T-cell (primary cell): ENCODE measurements at regions of chr11 and their contacts with region 1.

Region 1: GRCh38 chr11:90564531-90564930 is 341.7 kb upstream of the CHORDC1 start:
- DNase-seq: no peak
- ATAC-seq: no peak
- H3K4me3 ChIP-seq: no peak overlapping the region
- H3K4me3 Mint-ChIP-seq: no peak overlapping the region
- H3K27ac ChIP-seq: no peak overlapping the region
- H3K27ac Mint-ChIP-seq: no peak overlapping the region
- H3K4me1 ChIP-seq: no peaks in the 10 kb centered on the region
- H3K4me1 Mint-ChIP-seq: no peaks in the 10 kb centered on the region
- H3K27me3 ChIP-seq: no peaks in the 10 kb centered on the region
- H3K27me3 Mint-ChIP-seq: no peaks in the 10 kb centered on the region

Region 2: GRCh38 chr11:90542092-90542491 is 22.4 kb before region 1 on chr11:
- CTCF ChIA-PET with region 1: no interaction called
- POLR2A ChIA-PET with region 1: no interaction called
- DNase-seq: no peak
- ATAC-seq: no peak
- H3K4me3 ChIP-seq: no peak overlapping the region
- H3K4me3 Mint-ChIP-seq: no peak overlapping the region
- H3K27ac ChIP-seq: no peak overlapping the region
- H3K27ac Mint-ChIP-seq: no peak overlapping the region
- H3K4me1 ChIP-seq: no peaks in the 10 kb centered on the region
- H3K4me1 Mint-ChIP-seq: no peaks in the 10 kb centered on the region
- H3K27me3 ChIP-seq: no peaks in the 10 kb centered on the region
- H3K27me3 Mint-ChIP-seq: no peaks in the 10 kb centered on the region

Region 3: GRCh38 chr11:90593099-90593498 is 28.6 kb after region 1 on chr11:
- CTCF ChIA-PET with region 1: no interaction called
- POLR2A ChIA-PET with region 1: no interaction called
- DNase-seq: no peak
- ATAC-seq: no peak
- H3K4me3 ChIP-seq: no peak overlapping the region
- H3K4me3 Mint-ChIP-seq: no peak overlapping the region
- H3K27ac ChIP-seq: no peak overlapping the region
- H3K27ac Mint-ChIP-seq: no peak overlapping the region
- H3K4me1 ChIP-seq: no peaks in the 10 kb centered on the region
- H3K4me1 Mint-ChIP-seq: no peaks in the 10 kb centered on the region
- H3K27me3 ChIP-seq: no peaks in the 10 kb centered on the region
- H3K27me3 Mint-ChIP-seq: no peaks in the 10 kb centered on the region

Region 4: DNA sequence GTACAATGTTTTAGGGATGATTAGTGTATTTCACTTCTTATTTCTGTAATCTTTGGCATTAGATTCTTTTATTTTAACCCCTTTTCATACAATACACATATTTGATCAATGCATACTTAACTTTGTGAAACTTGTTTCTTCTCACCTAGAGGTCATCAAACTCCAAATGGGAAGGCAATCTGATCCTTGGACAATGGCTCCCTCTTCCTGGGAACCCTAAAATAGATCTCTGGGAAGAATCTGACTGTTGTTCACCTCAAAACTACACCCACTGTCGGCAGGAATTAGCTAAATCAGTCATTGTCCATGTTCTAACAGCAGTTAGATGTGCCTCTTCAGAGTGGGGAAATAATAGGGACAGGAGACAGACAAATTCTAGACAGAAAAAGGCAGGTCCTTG is 365.7 kb after region 1 on chr11:
- CTCF ChIA-PET with region 1: interaction called in 1 of 2 experiments, 10 read pairs
- POLR2A ChIA-PET with region 1: no interaction called
- DNase-seq: no peak
- ATAC-seq: no peak
- H3K4me3 ChIP-seq: no peak overlapping the region
- H3K4me3 Mint-ChIP-seq: no peak overlapping the region
- H3K27ac ChIP-seq: no peak overlapping the region
- H3K27ac Mint-ChIP-seq: no peak overlapping the region
- H3K4me1 ChIP-seq: no peaks in the 10 kb centered on the region
- H3K4me1 Mint-ChIP-seq: no peaks in the 10 kb centered on the region
- H3K27me3 ChIP-seq: no peaks in the 10 kb centered on the region
- H3K27me3 Mint-ChIP-seq: no peaks in the 10 kb centered on the region